PC-3 (cell line): ENCODE measurements at regions of chr21 and their contacts with region 1.

Region 1: GRCh38 chr21:22490044-22490443 is 1491.8 kb downstream of the NCAM2 start:
- DNase-seq: peak; percentile 52
- ATAC-seq: peak; percentile 97
- H3K4me3 ChIP-seq: no peak overlapping the region
- H3K27ac ChIP-seq: no peak overlapping the region
- H3K4me1 ChIP-seq: peaks cover 4% of the 10 kb centered on the region; the same call in 1 of the 2 replicates
- H3K27me3 ChIP-seq: no peaks in the 10 kb centered on the region
- CTCF ChIP-seq: no peak

Region 2: GRCh38 chr21:22536506-22536905 is 46.5 kb after region 1 on chr21:
- CTCF ChIA-PET with region 1: no interaction called
- POLR2A ChIA-PET with region 1: no interaction called
- intact Hi-C with region 1: loop called (anchors 2 kb)
- DNase-seq: peak; percentile 81
- ATAC-seq: peak; percentile 100
- H3K4me3 ChIP-seq: no peak overlapping the region
- H3K27ac ChIP-seq: peak overlapping the region; percentile 61
- H3K4me1 ChIP-seq: peaks cover 14% of the 10 kb centered on the region
- H3K27me3 ChIP-seq: no peaks in the 10 kb centered on the region
- CTCF ChIP-seq: no peak